ENCODE measurements at regions of chr1 and their contacts with region 1.

Region 1: GRCh38 chr1:174999216-174999925 is 376 bp upstream of the CACYBP start:
- DNase-seq: peak; percentile 98
- ATAC-seq: peak; percentile 93 to 96
- H3K4me3 ChIP-seq: peak overlapping the region; percentile 92
- H3K27ac ChIP-seq: peak overlapping the region; percentile 99
- H3K4me1 ChIP-seq: peaks cover 36% of the 10 kb centered on the region
- H3K27me3 ChIP-seq: no peaks in the 10 kb centered on the region
- CTCF ChIP-seq: no peak

Region 2: DNA sequence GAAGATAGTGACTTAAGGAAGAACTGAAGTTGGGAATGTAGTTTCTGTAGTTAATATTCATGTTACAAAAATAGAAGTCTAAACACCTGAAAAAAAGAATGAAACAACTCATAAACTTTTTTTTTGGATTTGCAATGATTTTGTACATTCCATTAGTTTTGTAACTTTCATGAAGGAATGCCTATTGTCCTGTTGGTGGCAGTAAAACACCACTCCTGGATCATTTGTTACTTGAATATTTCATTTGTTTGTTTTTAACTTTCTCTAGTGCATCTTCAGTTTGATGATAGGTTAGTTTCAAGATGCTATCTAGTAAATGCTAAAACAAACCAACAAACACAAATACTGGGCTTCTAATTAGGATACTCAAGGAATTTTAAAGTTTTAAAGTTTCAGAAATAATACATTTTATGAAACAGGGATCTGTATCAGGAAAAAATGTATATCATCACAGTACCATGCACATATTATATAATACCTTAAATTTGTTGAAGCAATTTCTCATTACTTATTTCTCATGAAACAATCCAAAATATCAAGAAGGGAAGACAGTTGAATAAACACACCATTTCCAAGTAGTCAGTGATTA is 229.3 kb before region 1 on chr1:
- intact Hi-C with region 1: loop called (anchors 10 kb)
- DNase-seq: no peak
- ATAC-seq: peak; percentile 62 to 79
- H3K4me3 ChIP-seq: no peak overlapping the region
- H3K27ac ChIP-seq: no peak overlapping the region
- H3K4me1 ChIP-seq: no peaks in the 10 kb centered on the region
- H3K27me3 ChIP-seq: no peaks in the 10 kb centered on the region
- CTCF ChIP-seq: peak; percentile 73

Region 3: GRCh38 chr1:174786760-174787159 is 212.6 kb before region 1 on chr1:
- intact Hi-C with region 1: no loop called
- DNase-seq: no peak
- ATAC-seq: no peak
- H3K4me3 ChIP-seq: no peak overlapping the region
- H3K27ac ChIP-seq: no peak overlapping the region
- H3K4me1 ChIP-seq: no peaks in the 10 kb centered on the region
- H3K27me3 ChIP-seq: no peaks in the 10 kb centered on the region
- CTCF ChIP-seq: no peak

Region 4: DNA sequence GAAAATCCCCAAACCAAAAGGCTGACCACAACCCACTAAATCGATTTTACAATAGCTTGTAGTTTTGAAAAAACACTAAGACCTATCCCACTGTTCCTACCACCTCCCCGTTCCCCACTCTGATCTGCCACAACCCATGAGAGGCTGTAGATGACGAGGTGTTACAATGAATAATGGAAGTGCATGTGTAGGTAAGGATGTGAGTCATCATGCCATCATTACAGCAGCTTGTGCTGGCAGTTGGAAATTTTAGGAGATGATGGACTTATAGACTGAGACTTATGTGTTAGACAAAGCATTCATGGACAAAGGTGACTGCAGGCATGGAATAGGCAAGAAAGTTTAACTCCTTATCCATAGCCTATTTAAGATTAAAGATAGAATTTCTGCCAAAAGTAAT is 184.3 kb before region 1 on chr1:
- intact Hi-C with region 1: no loop called
- DNase-seq: no peak
- ATAC-seq: no peak
- H3K4me3 ChIP-seq: no peak overlapping the region
- H3K27ac ChIP-seq: no peak overlapping the region
- H3K4me1 ChIP-seq: no peaks in the 10 kb centered on the region
- H3K27me3 ChIP-seq: no peaks in the 10 kb centered on the region
- CTCF ChIP-seq: no peak